Natural killer cell (primary cell): ENCODE measurements at regions of chr9 and their contacts with region 1.

Region 1: GRCh38 chr9:84793251-84793650 is 123.7 kb downstream of the NTRK2 start:
- DNase-seq: no peak
- ATAC-seq: no peak
- H3K4me3 ChIP-seq: no peak overlapping the region
- H3K4me3 Mint-ChIP-seq: no peak overlapping the region
- H3K27ac ChIP-seq: no peak overlapping the region
- H3K27ac Mint-ChIP-seq: no peak overlapping the region
- H3K4me1 ChIP-seq: no peaks in the 10 kb centered on the region
- H3K4me1 Mint-ChIP-seq: no peaks in the 10 kb centered on the region
- H3K27me3 ChIP-seq: peaks cover 2% of the 10 kb centered on the region
- H3K27me3 Mint-ChIP-seq: peaks cover 23 to 34% of the 10 kb centered on the region in 2 donors
- CTCF ChIP-seq: no peak

Region 2: GRCh38 chr9:84557751-84558150 is 235.5 kb before region 1 on chr9:
- intact Hi-C with region 1: no loop called
- DNase-seq: no peak
- ATAC-seq: no peak
- H3K4me3 ChIP-seq: no peak overlapping the region
- H3K4me3 Mint-ChIP-seq: no peak overlapping the region
- H3K27ac ChIP-seq: no peak overlapping the region
- H3K27ac Mint-ChIP-seq: no peak overlapping the region
- H3K4me1 ChIP-seq: no peaks in the 10 kb centered on the region
- H3K4me1 Mint-ChIP-seq: no peaks in the 10 kb centered on the region
- H3K27me3 ChIP-seq: no peaks in the 10 kb centered on the region
- H3K27me3 Mint-ChIP-seq: peaks cover 30 to 65% of the 10 kb centered on the region in 2 donors
- CTCF ChIP-seq: no peak

Region 3: DNA sequence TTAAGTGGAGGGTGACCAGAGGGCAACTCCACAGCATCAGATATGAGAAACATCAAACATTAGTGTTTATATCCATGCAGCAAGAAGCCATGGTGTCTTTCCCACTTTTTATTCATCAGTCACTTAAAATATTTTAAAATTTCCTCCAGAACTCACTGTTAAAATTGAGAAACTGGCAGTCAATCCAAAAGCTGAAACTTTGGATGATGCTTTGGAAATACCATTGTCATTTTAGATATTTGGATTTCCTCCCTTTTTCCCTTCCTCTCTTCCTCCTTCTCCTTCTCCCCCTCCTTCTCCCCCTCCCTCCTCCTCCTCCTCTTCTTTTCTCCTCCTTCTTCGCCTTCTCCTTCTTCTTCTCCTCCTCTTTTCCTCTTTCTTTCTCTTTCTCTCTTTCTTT is 156.8 kb before region 1 on chr9:
- intact Hi-C with region 1: no loop called
- DNase-seq: no peak
- ATAC-seq: no peak
- H3K4me3 ChIP-seq: no peak overlapping the region
- H3K4me3 Mint-ChIP-seq: no peak overlapping the region
- H3K27ac ChIP-seq: no peak overlapping the region
- H3K27ac Mint-ChIP-seq: no peak overlapping the region
- H3K4me1 ChIP-seq: no peaks in the 10 kb centered on the region
- H3K4me1 Mint-ChIP-seq: no peaks in the 10 kb centered on the region
- H3K27me3 ChIP-seq: peaks cover 2% of the 10 kb centered on the region
- H3K27me3 Mint-ChIP-seq: peaks cover 10 to 36% of the 10 kb centered on the region in 2 donors
- CTCF ChIP-seq: no peak

Region 4: DNA sequence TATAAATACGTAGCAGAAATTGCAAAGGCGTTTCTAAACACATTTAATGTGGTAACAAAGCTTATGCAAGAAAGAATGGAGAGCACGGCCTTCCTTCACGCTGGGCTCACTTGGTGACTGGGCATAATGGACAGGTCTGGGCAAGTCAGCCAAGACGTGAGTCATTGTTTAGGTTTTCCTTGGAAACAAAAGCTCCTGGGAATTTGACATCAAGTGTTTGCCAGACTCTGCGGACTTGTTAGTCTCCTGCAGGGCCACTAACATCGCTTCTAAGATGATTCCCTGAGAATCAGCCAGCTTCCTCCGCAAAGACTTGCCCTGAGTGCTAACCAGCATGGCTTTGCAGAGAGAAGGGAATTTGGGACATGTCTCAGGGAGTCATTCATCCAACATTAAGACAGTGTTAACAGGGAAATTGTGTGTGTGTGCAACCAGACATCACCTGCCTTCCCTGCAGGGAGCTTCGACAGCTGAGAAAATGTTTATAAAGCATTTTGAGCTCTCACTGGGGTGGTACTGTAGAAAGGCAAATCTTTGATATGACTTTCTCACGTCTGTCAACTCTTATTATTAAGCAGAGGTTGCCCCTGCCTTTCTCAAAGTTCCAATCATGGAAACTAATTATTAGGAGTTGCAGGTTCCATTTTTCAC is 58.8 kb after region 1 on chr9:
- intact Hi-C with region 1: loop called (anchors 10 kb)
- DNase-seq: no peak
- ATAC-seq: no peak
- H3K4me3 ChIP-seq: no peak overlapping the region
- H3K4me3 Mint-ChIP-seq: no peak overlapping the region
- H3K27ac ChIP-seq: no peak overlapping the region
- H3K27ac Mint-ChIP-seq: no peak overlapping the region
- H3K4me1 ChIP-seq: no peaks in the 10 kb centered on the region
- H3K4me1 Mint-ChIP-seq: no peaks in the 10 kb centered on the region
- H3K27me3 ChIP-seq: no peaks in the 10 kb centered on the region
- H3K27me3 Mint-ChIP-seq: peaks cover 0 to 23% of the 10 kb centered on the region in 2 donors
- CTCF ChIP-seq: no peak

Region 5: DNA sequence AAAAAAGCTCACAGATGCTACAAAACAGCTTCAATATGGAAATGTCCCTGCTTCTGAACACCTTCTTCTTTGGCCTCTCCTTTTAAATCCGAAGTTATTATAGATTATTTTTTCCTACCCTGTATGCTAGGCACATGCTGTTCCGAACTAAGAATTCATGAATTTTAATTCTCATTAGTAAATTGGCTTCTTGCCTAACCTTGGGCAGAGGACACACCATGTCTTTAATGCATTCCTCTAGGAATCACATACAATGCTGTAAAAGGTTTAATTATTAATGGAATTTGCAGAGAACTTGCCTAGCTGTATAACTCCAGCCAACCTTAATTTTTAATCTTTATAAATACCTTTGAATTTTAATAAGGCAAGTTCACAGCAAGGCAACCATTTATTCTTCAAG is 110.7 kb after region 1 on chr9:
- intact Hi-C with region 1: no loop called
- DNase-seq: no peak
- ATAC-seq: no peak
- H3K4me3 ChIP-seq: no peak overlapping the region
- H3K4me3 Mint-ChIP-seq: no peak overlapping the region
- H3K27ac ChIP-seq: no peak overlapping the region
- H3K27ac Mint-ChIP-seq: no peak overlapping the region
- H3K4me1 ChIP-seq: no peaks in the 10 kb centered on the region
- H3K4me1 Mint-ChIP-seq: no peaks in the 10 kb centered on the region
- H3K27me3 ChIP-seq: no peaks in the 10 kb centered on the region
- H3K27me3 Mint-ChIP-seq: peaks cover 15 to 17% of the 10 kb centered on the region in 2 donors
- CTCF ChIP-seq: no peak